K562 (cell line): ENCODE measurements at regions of chr4 and their contacts with region 1.

Region 1: GRCh38 chr4:37603070-37603468 is 83.1 kb downstream of the RELL1 start:
- DNase-seq: peak; percentile 76 to 87 (median 83)
- ATAC-seq: peak; percentile 99
- H3K4me3 ChIP-seq: no peak overlapping the region
- H3K27ac ChIP-seq: no peak overlapping the region
- H3K4me1 ChIP-seq: 0 out of 5 replicates have a peak, but pooled peaks cover 0 to 3% of the 10 kb centered on the region in 2 experiments
- H3K27me3 ChIP-seq: no peaks in the 10 kb centered on the region; a peak in 2 of 5 replicates
- CTCF ChIP-seq: peak; percentile 86 to 93 (median 92)
- EP300 ChIP-seq: no peak
- POLR2A ChIP-seq: no peak
- RAD21 ChIP-seq: peak; percentile 90 to 96

Region 2: DNA sequence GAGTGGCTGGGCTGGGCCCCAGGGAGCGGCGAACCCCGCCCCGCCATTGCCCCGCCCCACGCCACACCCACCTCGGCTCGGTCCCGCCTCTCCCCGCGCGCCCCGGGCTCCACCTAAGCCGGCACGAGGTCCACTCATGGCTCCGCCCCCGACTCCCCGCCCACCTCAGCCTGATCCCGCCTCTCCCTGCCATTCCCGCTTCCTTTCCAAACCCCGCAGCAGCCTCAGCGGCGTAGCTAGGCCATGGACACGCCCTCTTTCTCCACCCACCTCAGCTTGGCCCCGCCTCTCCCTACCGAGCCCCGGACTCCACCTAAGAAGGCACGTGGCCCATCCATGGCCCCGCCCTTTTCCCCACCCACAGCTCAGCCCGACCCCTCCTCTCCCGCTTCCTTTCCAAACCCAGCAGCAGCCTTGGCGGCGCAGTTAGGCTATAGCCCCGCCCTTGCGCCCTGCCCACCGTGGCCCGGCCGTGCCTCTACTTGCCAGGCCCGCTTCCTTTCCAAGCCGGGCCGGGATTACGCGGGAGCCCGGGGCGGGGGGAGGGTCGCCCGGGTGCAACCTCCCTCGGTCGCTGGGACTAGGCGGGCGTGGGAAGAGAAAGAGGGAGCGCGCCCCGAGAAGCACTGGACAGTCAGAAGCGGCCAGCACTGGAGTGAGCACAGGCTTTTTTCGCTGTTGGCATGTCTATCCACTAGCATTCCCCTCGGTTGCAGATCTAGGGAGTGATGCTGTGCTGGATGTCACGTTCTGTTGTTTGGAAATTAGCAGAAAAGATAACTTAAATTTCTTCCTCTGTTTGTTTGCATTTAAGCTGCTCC is 83.5 kb after region 1 on chr4 and contains the start of gene RELL1:
- CTCF ChIA-PET with region 1: no interaction called
- POLR2A ChIA-PET with region 1: no interaction called
- in situ Hi-C with region 1: no loop called
- intact Hi-C with region 1: loop called (anchors 10 kb)
- DNase-seq: peak; percentile 96 to 98 (median 98)
- ATAC-seq: peak; percentile 94
- H3K4me3 ChIP-seq: peak within 1 kb of the TSS; percentile 64
- H3K27ac ChIP-seq: peak within 1 kb of the TSS; percentile 53; the same call in 1 of the 3 replicates
- H3K4me1 ChIP-seq: peaks cover 9 to 14% of the 10 kb centered on the region in 2 experiments; a peak in 4 of 5 replicates
- H3K27me3 ChIP-seq: no peaks in the 10 kb centered on the region; a peak in 2 of 5 replicates
- CTCF ChIP-seq: no peak
- EP300 ChIP-seq: no peak
- POLR2A ChIP-seq: no peak
- RAD21 ChIP-seq: no peak
- polyA plus RNA-seq, gene RELL1: 0.06 TPM in 1 of 2 experiments, not detected in the other

Region 3: GRCh38 chr4:37788819-37789218 is 185.8 kb after region 1 on chr4:
- CTCF ChIA-PET with region 1: no interaction called
- POLR2A ChIA-PET with region 1: no interaction called
- in situ Hi-C with region 1: loop called (anchors 5 kb)
- intact Hi-C with region 1: no loop called
- DNase-seq: no peak
- ATAC-seq: no peak
- H3K4me3 ChIP-seq: no peak overlapping the region
- H3K27ac ChIP-seq: no peak overlapping the region
- H3K4me1 ChIP-seq: no peaks in the 10 kb centered on the region
- H3K27me3 ChIP-seq: no peaks in the 10 kb centered on the region
- CTCF ChIP-seq: no peak
- EP300 ChIP-seq: no peak
- POLR2A ChIP-seq: no peak
- RAD21 ChIP-seq: no peak

Region 4: DNA sequence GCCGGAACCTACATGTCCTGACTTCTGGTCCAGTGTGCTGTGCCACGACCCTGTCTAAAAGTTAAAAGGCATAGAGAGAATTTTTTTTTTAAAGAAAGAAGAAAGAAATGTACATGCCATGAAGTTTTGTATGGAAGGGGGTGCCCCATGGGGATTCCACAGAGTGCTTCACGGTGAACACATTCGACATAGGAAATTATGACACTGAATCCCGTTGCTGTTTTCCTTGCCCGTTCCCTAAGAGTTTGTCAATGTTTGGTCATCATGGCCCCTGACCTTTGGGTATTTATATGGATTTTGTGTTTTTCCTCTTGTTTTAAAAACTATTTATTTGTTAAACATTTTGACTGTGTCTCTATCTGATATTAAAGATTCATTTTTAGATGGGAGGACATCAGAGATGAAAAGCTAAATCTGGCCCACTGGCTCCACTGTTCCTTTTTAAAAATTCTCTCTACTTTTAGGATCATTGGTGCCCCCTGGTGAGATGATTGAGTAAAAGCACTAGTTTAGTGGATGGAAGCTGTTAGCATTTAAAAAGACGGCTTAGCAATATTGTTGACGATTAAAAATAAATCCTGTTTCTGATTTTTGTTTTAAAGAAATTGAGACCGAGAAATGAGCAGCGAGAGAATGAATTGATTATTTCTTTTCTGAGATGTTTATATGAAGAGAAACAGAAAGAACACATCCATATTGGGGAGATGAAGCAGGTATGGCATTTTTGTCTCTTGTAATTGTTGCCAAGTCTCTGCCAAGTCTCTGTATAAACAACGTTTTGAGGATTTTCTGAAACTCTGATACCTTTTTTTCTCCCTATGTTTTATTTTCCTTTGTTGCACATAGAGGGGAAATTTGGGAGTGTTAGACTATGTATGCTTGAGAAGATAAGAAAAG is 432.2 kb after region 1 on chr4:
- CTCF ChIA-PET with region 1: interaction called, 5 read pairs
- POLR2A ChIA-PET with region 1: no interaction called
- in situ Hi-C with region 1: no loop called
- intact Hi-C with region 1: loop called (anchors 1 kb)
- DNase-seq: peak; percentile 47 to 67 (median 54)
- ATAC-seq: peak; percentile 64; the same call in 2 of the 3 replicates
- H3K4me3 ChIP-seq: no peak overlapping the region
- H3K27ac ChIP-seq: no peak overlapping the region
- H3K4me1 ChIP-seq: no peaks in the 10 kb centered on the region
- H3K27me3 ChIP-seq: peaks cover 4 to 13% of the 10 kb centered on the region in 2 experiments; a peak in 2 of 5 replicates
- CTCF ChIP-seq: peak; percentile 44 to 73 (median 50); a peak in 4 of 6 replicates
- EP300 ChIP-seq: no peak
- POLR2A ChIP-seq: no peak
- RAD21 ChIP-seq: peak; percentile 85 to 86